ENCODE measurements at regions of chr12 and their contacts with region 1.

Region 1: GRCh38 chr12:81257947-81258551 is 180.2 kb downstream of the ACSS3 start:
- DNase-seq: no peak
- ATAC-seq: no peak
- H3K4me3 ChIP-seq: no peak overlapping the region
- H3K27ac ChIP-seq: no peak overlapping the region
- H3K4me1 ChIP-seq: no peaks in the 10 kb centered on the region
- H3K27me3 ChIP-seq: no peaks in the 10 kb centered on the region
- CTCF ChIP-seq: peak in 7 of 9 donors; percentile 33 to 55 (median 42)

Region 2: GRCh38 chr12:80843969-80844368 is 414.1 kb before region 1 on chr12:
- intact Hi-C with region 1: loop called in 2 of 10 experiments (anchors 5 to 10 kb)
- DNase-seq: no peak
- ATAC-seq: no peak
- H3K4me3 ChIP-seq: no peak overlapping the region
- H3K27ac ChIP-seq: no peak overlapping the region
- H3K4me1 ChIP-seq: peaks cover 0 to 5% (median 2%) of the 10 kb centered on the region in 9 donors
- H3K27me3 ChIP-seq: no peaks in the 10 kb centered on the region
- CTCF ChIP-seq: no peak

Measured in heart right ventricle (tissue), 16 donors.